GM10248 (cell line): ENCODE measurements at regions of chrX and their contacts with region 1.

Region 1: DNA sequence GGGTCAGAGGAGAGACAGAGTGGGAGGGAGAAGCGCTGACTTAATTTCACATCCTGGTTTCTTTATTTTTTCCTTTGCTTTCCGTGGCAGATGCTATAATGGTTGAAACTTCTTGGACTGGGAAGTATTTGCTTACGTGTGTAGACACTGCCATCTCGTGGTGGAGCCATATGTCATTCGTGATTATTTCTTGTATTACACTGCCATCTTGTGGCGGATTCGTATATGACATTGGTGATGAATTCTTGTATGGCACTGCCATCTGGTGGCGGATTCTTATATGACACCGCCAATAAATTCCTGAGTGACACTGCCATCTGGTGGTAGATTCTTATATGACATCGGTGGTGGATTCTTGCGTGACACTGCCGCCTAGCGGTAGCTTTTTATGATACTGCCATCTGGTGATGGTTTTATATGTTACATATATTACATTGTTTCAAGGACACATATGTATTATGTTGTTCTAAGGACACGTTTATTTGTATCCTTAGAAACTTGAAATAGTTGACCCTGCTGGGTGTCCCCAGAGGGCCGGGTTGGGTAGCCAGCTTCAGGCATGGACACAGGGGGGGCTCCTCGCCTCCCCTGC is 37.3 kb upstream of the CLCN4 start:
- DNase-seq: peak; percentile 55
- CTCF ChIP-seq: peak; percentile 67

Region 2: GRCh38 chrX:9980927-9981326 is 138.6 kb before region 1 on chrX:
- CTCF ChIA-PET with region 1: interaction called, 35 read pairs
- POLR2A ChIA-PET with region 1: no interaction called
- DNase-seq: no peak
- CTCF ChIP-seq: no peak

Region 3: DNA sequence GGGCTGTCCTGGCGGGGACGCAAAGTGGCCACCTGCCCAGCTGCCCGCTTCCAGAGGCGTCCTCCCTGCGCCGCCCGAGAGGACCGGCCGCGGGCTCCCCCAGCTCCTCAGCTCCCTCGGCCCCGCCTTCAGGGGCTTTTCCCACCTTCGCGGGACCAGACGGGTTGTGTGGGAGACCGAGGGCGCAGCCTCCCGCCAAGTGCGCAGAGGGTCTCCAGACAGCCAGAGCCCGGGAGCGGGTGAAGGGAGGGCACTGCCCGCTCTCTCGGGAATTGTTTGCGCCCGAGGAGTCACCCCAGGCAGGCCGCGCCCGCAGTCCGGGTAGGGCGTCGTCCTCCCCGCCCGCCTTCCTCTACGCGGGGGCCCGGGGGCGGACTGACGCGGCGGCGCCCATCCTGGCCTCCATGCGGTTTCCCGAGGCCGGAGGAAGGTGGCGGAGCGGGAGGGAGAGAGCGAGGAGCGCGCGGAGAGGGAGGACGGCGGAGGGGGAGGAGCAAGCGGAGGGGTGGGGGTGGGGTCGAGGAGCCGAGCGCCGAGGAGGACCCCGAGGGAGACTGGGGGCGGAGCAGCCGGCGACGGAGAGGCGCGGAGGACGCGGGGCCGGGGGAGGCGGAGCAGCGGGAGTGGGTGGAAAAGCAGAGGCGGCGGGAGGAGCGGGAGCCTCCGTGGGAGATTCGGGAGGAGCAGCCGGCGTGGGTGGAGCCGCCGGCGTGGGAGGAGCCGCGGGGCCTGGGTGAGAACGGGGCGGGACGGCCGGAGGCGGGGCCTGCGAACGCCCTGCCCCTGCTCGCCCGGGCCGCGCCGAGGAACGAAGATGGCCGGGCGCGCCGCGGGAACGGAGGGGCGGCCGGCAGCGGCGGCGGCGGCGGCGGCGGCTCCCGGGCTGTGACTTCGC is 104.8 kb before region 1 on chrX:
- CTCF ChIA-PET with region 1: interaction called, 32 read pairs
- POLR2A ChIA-PET with region 1: no interaction called
- DNase-seq: peak; percentile 82
- CTCF ChIP-seq: no peak

Region 4: GRCh38 chrX:10071451-10072144 is 47.9 kb before region 1 on chrX:
- CTCF ChIA-PET with region 1: interaction called, 13 read pairs
- POLR2A ChIA-PET with region 1: no interaction called
- DNase-seq: no peak
- CTCF ChIP-seq: no peak

Region 5: GRCh38 chrX:10133980-10134676 is 14.6 kb after region 1 on chrX:
- CTCF ChIA-PET with region 1: interaction called, 13 read pairs
- POLR2A ChIA-PET with region 1: no interaction called
- DNase-seq: no peak
- CTCF ChIP-seq: no peak

Region 6: DNA sequence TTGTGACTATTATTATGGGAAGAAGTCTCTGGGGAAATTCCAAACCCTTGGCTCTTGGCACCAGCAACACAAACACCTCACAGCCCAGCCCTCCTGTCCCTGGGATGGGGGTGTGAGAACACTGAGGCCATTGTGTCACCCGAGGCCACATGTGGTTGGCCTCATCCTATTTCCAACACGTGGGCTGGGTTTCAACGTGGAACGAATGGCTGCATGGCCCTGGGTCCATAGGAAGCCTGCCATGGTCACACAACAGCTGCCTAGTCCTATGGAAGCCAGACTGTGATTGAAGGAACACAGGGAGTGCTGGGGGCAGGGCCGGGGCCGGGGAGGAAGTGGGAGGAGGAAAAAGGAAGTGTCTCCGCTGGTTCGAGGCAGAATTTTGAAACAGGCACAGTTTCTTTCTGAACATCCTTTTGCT is 47.2 kb after region 1 on chrX:
- CTCF ChIA-PET with region 1: interaction called, 17 read pairs
- POLR2A ChIA-PET with region 1: no interaction called
- DNase-seq: peak; percentile 28
- CTCF ChIP-seq: no peak